ENCODE measurements at regions of chr17 and their contacts with region 1.

Region 1: GRCh38 chr17:42019509-42020404 is at the start of gene NKIRAS2:
- DNase-seq: peak; percentile 95
- ATAC-seq: peak; percentile 78
- H3K4me3 Mint-ChIP-seq: peak within 1 kb of the TSS; percentile 93
- H3K27ac Mint-ChIP-seq: peak within 1 kb of the TSS; percentile 77
- H3K4me1 Mint-ChIP-seq: peaks cover 57% of the 10 kb centered on the region
- H3K27me3 Mint-ChIP-seq: no peaks in the 10 kb centered on the region
- total RNA-seq, gene NKIRAS2: 21.0 to 23.7 TPM

Region 2: GRCh38 chr17:42101513-42102319 is 82.0 kb after region 1 on chr17:
- CTCF ChIA-PET with region 1: interaction called, 35 read pairs
- DNase-seq: peak; percentile 80
- ATAC-seq: peak; percentile 64
- H3K4me3 Mint-ChIP-seq: no peak overlapping the region
- H3K27ac Mint-ChIP-seq: no peak overlapping the region
- H3K4me1 Mint-ChIP-seq: peaks cover 8% of the 10 kb centered on the region
- H3K27me3 Mint-ChIP-seq: peaks cover 15% of the 10 kb centered on the region

Region 3: GRCh38 chr17:42112552-42113176 is 92.9 kb after region 1 on chr17 and contains the start of gene DHX58:
- CTCF ChIA-PET with region 1: interaction called, 103 read pairs
- DNase-seq: peak; percentile 92
- ATAC-seq: peak; percentile 85
- H3K4me3 Mint-ChIP-seq: peak within 1 kb of the TSS; percentile 91
- H3K27ac Mint-ChIP-seq: peak within 1 kb of the TSS; percentile 98
- H3K4me1 Mint-ChIP-seq: peaks cover 56% of the 10 kb centered on the region
- H3K27me3 Mint-ChIP-seq: no peaks in the 10 kb centered on the region
- total RNA-seq, gene DHX58: 65.8 to 105 TPM

Region 4: DNA sequence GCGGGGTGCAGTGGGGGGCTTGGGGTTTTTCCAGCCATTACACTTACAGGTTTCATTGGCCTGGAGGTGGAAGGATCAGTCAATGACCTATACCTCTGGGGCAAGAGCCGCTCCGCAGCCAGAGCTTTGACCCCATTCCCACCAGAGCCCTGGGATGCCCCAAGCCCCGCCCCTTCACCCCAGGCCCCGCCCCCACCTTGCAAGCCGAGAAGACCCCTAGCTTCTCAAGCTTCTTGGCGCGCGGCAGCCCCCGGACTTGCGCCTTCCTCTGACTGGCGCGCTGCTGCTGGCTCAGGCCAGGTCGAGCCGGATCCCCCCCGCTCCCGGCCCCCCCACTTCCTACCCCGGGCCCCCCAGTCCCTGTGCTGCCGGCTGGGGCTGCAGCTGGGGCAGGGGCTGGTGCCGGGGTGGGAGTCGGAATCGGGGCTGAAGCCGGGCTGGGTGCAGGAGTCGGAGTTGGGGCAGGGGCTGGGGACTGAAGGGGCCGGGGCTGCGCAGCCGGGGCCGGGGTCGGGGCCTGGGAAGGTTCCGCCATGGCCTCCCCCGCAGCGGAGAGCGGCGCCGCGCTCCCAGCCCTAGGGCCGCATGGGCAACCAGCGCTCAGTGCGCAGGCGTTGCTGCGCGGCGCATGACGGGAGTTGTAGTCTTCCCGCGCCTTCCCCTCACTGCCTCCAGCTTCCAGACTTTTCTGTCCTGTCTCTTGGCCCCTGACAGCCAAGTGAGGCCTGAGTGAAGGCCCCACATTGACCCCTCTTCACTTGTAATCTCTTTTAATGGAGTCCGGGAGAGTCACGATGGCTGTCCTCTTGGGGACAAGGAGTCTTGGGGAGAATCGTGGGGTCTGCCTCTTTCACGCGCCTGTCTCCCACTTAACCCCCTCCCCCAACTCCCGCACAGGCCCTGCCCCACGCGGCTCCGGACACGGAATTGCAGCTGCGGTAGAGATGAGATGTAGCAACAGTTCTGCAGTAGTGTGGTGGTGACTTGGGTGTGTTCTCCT is 101.3 kb after region 1 on chr17 and contains the start of gene KAT2A:
- CTCF ChIA-PET with region 1: interaction called, 103 read pairs
- DNase-seq: peak; percentile 84
- ATAC-seq: peak; percentile 93
- H3K4me3 Mint-ChIP-seq: peak within 1 kb of the TSS; percentile 67
- H3K27ac Mint-ChIP-seq: peak within 1 kb of the TSS; percentile 69
- H3K4me1 Mint-ChIP-seq: peaks cover 34% of the 10 kb centered on the region
- H3K27me3 Mint-ChIP-seq: no peaks in the 10 kb centered on the region
- total RNA-seq, gene KAT2A: 49.0 to 58.2 TPM

Measured in activated CD8-positive, alpha-beta memory T cell treated with anti-CD3 and anti-CD28 coated beads, Interleukin-2, amount 10 ng/mL, durations not matched to agents 7 days and 5 days (primary cell).